Breast epithelium (tissue), 4 donors: ENCODE measurements at regions of chr16 and their contacts with region 1.

Region 1: GRCh38 chr16:71421911-71422310 is 19.9 kb downstream of the TLE7 start:
- DNase-seq: no peak
- H3K4me3 ChIP-seq: no peak overlapping the region
- H3K27ac ChIP-seq: no peak overlapping the region
- H3K4me1 ChIP-seq: no peaks in the 10 kb centered on the region
- H3K27me3 ChIP-seq: peaks cover 0 to 42% of the 10 kb centered on the region in 2 donors
- CTCF ChIP-seq: no peak
- POLR2A ChIP-seq: no peak

Region 2: GRCh38 chr16:71441348-71441781 is 19.5 kb after region 1 on chr16:
- intact Hi-C with region 1: loop called (anchors 2 kb)
- DNase-seq: no peak
- H3K4me3 ChIP-seq: peak overlapping the region in 1 of 3 donors; percentile 19
- H3K27ac ChIP-seq: no peak overlapping the region
- H3K4me1 ChIP-seq: no peaks in the 10 kb centered on the region
- H3K27me3 ChIP-seq: peaks cover 0 to 32% of the 10 kb centered on the region in 2 donors
- CTCF ChIP-seq: no peak
- POLR2A ChIP-seq: no peak

Region 3: GRCh38 chr16:72612256-72612655 is 1190.3 kb after region 1 on chr16:
- intact Hi-C with region 1: no loop called
- DNase-seq: no peak
- H3K4me3 ChIP-seq: no peak overlapping the region
- H3K27ac ChIP-seq: no peak overlapping the region
- H3K4me1 ChIP-seq: no peaks in the 10 kb centered on the region
- H3K27me3 ChIP-seq: no peaks in the 10 kb centered on the region
- CTCF ChIP-seq: no peak
- POLR2A ChIP-seq: no peak